ENCODE measurements at regions of chr4 and their contacts with region 1.

Region 1: GRCh38 chr4:118367872-118368271 is 15.1 kb upstream of the PRSS12 start:
- DNase-seq: no peak
- ATAC-seq: no peak
- H3K4me3 ChIP-seq: no peak overlapping the region
- H3K4me3 Mint-ChIP-seq: no peak overlapping the region
- H3K27ac ChIP-seq: no peak overlapping the region
- H3K27ac Mint-ChIP-seq: no peak overlapping the region
- H3K4me1 ChIP-seq: no peaks in the 10 kb centered on the region
- H3K4me1 Mint-ChIP-seq: no peaks in the 10 kb centered on the region
- H3K27me3 ChIP-seq: no peaks in the 10 kb centered on the region
- H3K27me3 Mint-ChIP-seq: peaks cover 0 to 4% of the 10 kb centered on the region in 2 donors
- CTCF ChIP-seq: no peak

Region 2: GRCh38 chr4:117560329-117560728 is 807.5 kb before region 1 on chr4:
- intact Hi-C with region 1: loop called (anchors 10 kb)
- DNase-seq: no peak
- ATAC-seq: no peak
- H3K4me3 ChIP-seq: no peak overlapping the region
- H3K4me3 Mint-ChIP-seq: no peak overlapping the region
- H3K27ac ChIP-seq: no peak overlapping the region
- H3K27ac Mint-ChIP-seq: no peak overlapping the region
- H3K4me1 ChIP-seq: no peaks in the 10 kb centered on the region
- H3K4me1 Mint-ChIP-seq: no peaks in the 10 kb centered on the region
- H3K27me3 ChIP-seq: no peaks in the 10 kb centered on the region
- H3K27me3 Mint-ChIP-seq: no peaks in the 10 kb centered on the region
- CTCF ChIP-seq: no peak

Region 3: GRCh38 chr4:117996891-117997290 is 371.0 kb before region 1 on chr4:
- intact Hi-C with region 1: no loop called
- DNase-seq: no peak
- ATAC-seq: no peak
- H3K4me3 ChIP-seq: no peak overlapping the region
- H3K4me3 Mint-ChIP-seq: no peak overlapping the region
- H3K27ac ChIP-seq: no peak overlapping the region
- H3K27ac Mint-ChIP-seq: no peak overlapping the region
- H3K4me1 ChIP-seq: no peaks in the 10 kb centered on the region
- H3K4me1 Mint-ChIP-seq: no peaks in the 10 kb centered on the region
- H3K27me3 ChIP-seq: no peaks in the 10 kb centered on the region
- H3K27me3 Mint-ChIP-seq: no peaks in the 10 kb centered on the region
- CTCF ChIP-seq: no peak

Region 4: DNA sequence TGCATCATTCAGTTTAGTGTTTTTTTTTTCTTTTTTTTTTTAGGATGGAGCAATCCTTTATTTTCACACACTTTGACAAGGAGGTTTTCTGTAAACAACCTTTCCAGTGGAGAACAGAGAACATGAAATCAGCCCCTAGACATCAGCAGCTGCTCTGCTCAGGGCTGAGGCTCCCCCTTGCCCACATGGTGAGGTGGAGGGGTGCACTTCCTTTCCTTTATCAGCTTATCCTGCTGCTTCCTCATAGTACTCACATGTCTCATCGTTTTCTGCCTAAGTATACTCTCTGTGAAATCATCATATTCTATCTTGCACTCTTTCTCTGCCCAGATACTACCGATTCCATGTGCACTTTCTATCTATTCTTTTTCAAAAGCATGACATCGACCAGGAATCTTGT is 32.5 kb after region 1 on chr4:
- intact Hi-C with region 1: no loop called
- DNase-seq: no peak
- ATAC-seq: no peak
- H3K4me3 ChIP-seq: no peak overlapping the region
- H3K4me3 Mint-ChIP-seq: no peak overlapping the region
- H3K27ac ChIP-seq: no peak overlapping the region
- H3K27ac Mint-ChIP-seq: no peak overlapping the region
- H3K4me1 ChIP-seq: no peaks in the 10 kb centered on the region
- H3K4me1 Mint-ChIP-seq: no peaks in the 10 kb centered on the region
- H3K27me3 ChIP-seq: no peaks in the 10 kb centered on the region
- H3K27me3 Mint-ChIP-seq: peaks cover 0 to 2% of the 10 kb centered on the region in 2 donors
- CTCF ChIP-seq: no peak

Region 5: GRCh38 chr4:118825799-118826198 is 457.9 kb after region 1 on chr4:
- intact Hi-C with region 1: no loop called
- DNase-seq: no peak
- ATAC-seq: no peak
- H3K4me3 ChIP-seq: no peak overlapping the region
- H3K4me3 Mint-ChIP-seq: no peak overlapping the region
- H3K27ac ChIP-seq: no peak overlapping the region
- H3K27ac Mint-ChIP-seq: peak overlapping the region in 1 of 2 donors; percentile 3
- H3K4me1 ChIP-seq: no peaks in the 10 kb centered on the region
- H3K4me1 Mint-ChIP-seq: peaks cover 29 to 31% of the 10 kb centered on the region in 2 donors
- H3K27me3 ChIP-seq: no peaks in the 10 kb centered on the region
- H3K27me3 Mint-ChIP-seq: no peaks in the 10 kb centered on the region
- CTCF ChIP-seq: no peak

Region 6: GRCh38 chr4:118918388-118918787 is 550.5 kb after region 1 on chr4:
- intact Hi-C with region 1: no loop called
- DNase-seq: no peak
- ATAC-seq: no peak
- H3K4me3 ChIP-seq: no peak overlapping the region
- H3K4me3 Mint-ChIP-seq: no peak overlapping the region
- H3K27ac ChIP-seq: no peak overlapping the region
- H3K27ac Mint-ChIP-seq: no peak overlapping the region
- H3K4me1 ChIP-seq: no peaks in the 10 kb centered on the region
- H3K4me1 Mint-ChIP-seq: no peaks in the 10 kb centered on the region
- H3K27me3 ChIP-seq: peaks cover 2% of the 10 kb centered on the region
- H3K27me3 Mint-ChIP-seq: peaks cover 16 to 18% of the 10 kb centered on the region in 2 donors
- CTCF ChIP-seq: no peak

Measured in natural killer cell (primary cell).